Activated CD8-positive, alpha-beta T cell treated with anti-CD3 and anti-CD28 coated beads for 36 hours (primary cell): ENCODE measurements at regions of chr16 and their contacts with region 1.

Region 1: GRCh38 chr16:50665128-50665878 is 15.8 kb downstream of the SNX20 start:
- DNase-seq: peak; percentile 82
- ATAC-seq: peak; percentile 48
- H3K4me3 Mint-ChIP-seq: peak overlapping the region; percentile 54
- H3K27ac Mint-ChIP-seq: peak overlapping the region; percentile 58
- H3K4me1 Mint-ChIP-seq: peaks cover 31% of the 10 kb centered on the region
- H3K27me3 Mint-ChIP-seq: no peaks in the 10 kb centered on the region
- CTCF ChIP-seq: peak; percentile 96

Region 2: GRCh38 chr16:50354629-50355456 is 310.5 kb before region 1 on chr16:
- CTCF ChIA-PET with region 1: interaction called, 24 read pairs
- POLR2A ChIA-PET with region 1: interaction called, 3 read pairs
- intact Hi-C with region 1: loop called (anchors 10 kb)
- DNase-seq: no peak
- ATAC-seq: no peak
- H3K4me3 Mint-ChIP-seq: no peak overlapping the region
- H3K27ac Mint-ChIP-seq: peak overlapping the region; percentile 13
- H3K4me1 Mint-ChIP-seq: peaks cover 23% of the 10 kb centered on the region
- H3K27me3 Mint-ChIP-seq: no peaks in the 10 kb centered on the region
- CTCF ChIP-seq: peak; percentile 92

Region 3: DNA sequence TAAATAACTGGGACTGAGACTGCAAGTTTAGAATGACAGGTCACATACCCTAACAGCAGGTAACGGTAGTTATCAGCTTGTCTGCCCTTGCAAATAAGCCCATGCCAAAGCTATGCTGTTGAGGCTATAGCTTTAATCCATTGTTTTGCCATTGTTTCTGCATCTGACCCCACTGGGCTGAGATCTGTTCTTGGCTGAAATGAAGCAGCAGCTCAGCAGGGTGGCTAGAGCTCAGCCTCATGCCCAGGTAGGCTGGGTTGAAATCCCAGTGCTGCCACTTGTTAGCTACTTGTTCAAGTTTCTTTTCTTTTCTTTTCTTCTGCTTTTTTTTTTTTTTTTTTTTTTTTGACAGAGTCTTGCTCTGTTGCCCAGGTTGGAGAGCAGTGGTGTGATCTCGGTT is 77.0 kb before region 1 on chr16:
- CTCF ChIA-PET with region 1: interaction called, 17 read pairs
- POLR2A ChIA-PET with region 1: no interaction called
- intact Hi-C with region 1: no loop called
- DNase-seq: no peak
- ATAC-seq: no peak
- H3K4me3 Mint-ChIP-seq: no peak overlapping the region
- H3K27ac Mint-ChIP-seq: peak overlapping the region; percentile 94
- H3K4me1 Mint-ChIP-seq: peaks cover 38% of the 10 kb centered on the region
- H3K27me3 Mint-ChIP-seq: no peaks in the 10 kb centered on the region
- CTCF ChIP-seq: no peak

Region 4: GRCh38 chr16:50644729-50645128 is 20.6 kb before region 1 on chr16:
- CTCF ChIA-PET with region 1: interaction called, 48 read pairs
- POLR2A ChIA-PET with region 1: no interaction called
- intact Hi-C with region 1: no loop called
- DNase-seq: peak; percentile 74
- ATAC-seq: peak; percentile 88
- H3K4me3 Mint-ChIP-seq: no peak overlapping the region
- H3K27ac Mint-ChIP-seq: no peak overlapping the region
- H3K4me1 Mint-ChIP-seq: peaks cover 5% of the 10 kb centered on the region
- H3K27me3 Mint-ChIP-seq: no peaks in the 10 kb centered on the region
- CTCF ChIP-seq: peak; percentile 37

Region 5: GRCh38 chr16:50735629-50736122 is 70.4 kb after region 1 on chr16:
- CTCF ChIA-PET with region 1: interaction called, 18 read pairs
- POLR2A ChIA-PET with region 1: no interaction called
- intact Hi-C with region 1: no loop called
- DNase-seq: peak; percentile 51
- ATAC-seq: peak; percentile 43
- H3K4me3 Mint-ChIP-seq: no peak overlapping the region
- H3K27ac Mint-ChIP-seq: no peak overlapping the region
- H3K4me1 Mint-ChIP-seq: peaks cover 29% of the 10 kb centered on the region
- H3K27me3 Mint-ChIP-seq: no peaks in the 10 kb centered on the region
- CTCF ChIP-seq: no peak

Region 6: DNA sequence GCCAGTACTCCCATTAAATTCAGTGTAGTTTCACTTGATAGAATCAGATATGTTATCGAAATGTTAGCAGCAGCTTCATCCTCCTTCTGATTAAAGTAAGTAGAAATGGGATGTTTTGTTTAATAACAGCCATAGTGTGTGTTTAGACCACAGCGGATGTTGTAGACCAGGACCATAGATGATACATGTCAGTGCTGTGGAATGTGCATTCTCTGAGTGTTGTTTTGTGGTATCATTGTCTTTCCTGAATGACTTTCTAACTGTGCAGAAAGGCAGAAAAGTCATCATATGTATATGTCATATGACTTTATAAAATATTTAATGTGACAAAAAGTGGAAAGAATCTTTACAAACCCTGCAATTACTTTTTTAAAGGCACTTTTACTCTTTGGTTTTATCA is 132.2 kb after region 1 on chr16:
- CTCF ChIA-PET with region 1: interaction called, 275 read pairs
- POLR2A ChIA-PET with region 1: no interaction called
- intact Hi-C with region 1: no loop called
- DNase-seq: no peak
- ATAC-seq: no peak
- H3K4me3 Mint-ChIP-seq: no peak overlapping the region
- H3K27ac Mint-ChIP-seq: no peak overlapping the region
- H3K4me1 Mint-ChIP-seq: peaks cover 4% of the 10 kb centered on the region
- H3K27me3 Mint-ChIP-seq: no peaks in the 10 kb centered on the region
- CTCF ChIP-seq: no peak

Region 7: GRCh38 chr16:50917950-50918703 is 252.8 kb after region 1 on chr16:
- CTCF ChIA-PET with region 1: no interaction called
- POLR2A ChIA-PET with region 1: no interaction called
- intact Hi-C with region 1: no loop called
- DNase-seq: no peak
- ATAC-seq: no peak
- H3K4me3 Mint-ChIP-seq: no peak overlapping the region
- H3K27ac Mint-ChIP-seq: no peak overlapping the region
- H3K4me1 Mint-ChIP-seq: no peaks in the 10 kb centered on the region
- H3K27me3 Mint-ChIP-seq: peaks cover 2% of the 10 kb centered on the region
- CTCF ChIP-seq: no peak